H1 (cell line): ENCODE measurements at regions of chr1 and their contacts with region 1.

Region 1: GRCh38 chr1:201254625-201255506 is 28.4 kb upstream of the PKP1 start:
- DNase-seq: peak; percentile 34 to 100
- H3K4me3 ChIP-seq: no peak overlapping the region
- H3K27ac ChIP-seq: no peak overlapping the region
- H3K4me1 ChIP-seq: peaks cover 0 to 6% (median 5%) of the 10 kb centered on the region in 4 experiments; a peak in 5 of 7 replicates
- H3K27me3 ChIP-seq: no peaks in the 10 kb centered on the region; a peak in 2 of 7 replicates
- CTCF ChIP-seq: peak; percentile 97 to 98 (median 97)
- EP300 ChIP-seq: no peak
- POLR2A ChIP-seq: no peak
- RAD21 ChIP-seq: peak; percentile 98 to 99

Region 2: GRCh38 chr1:201100169-201100930 is 154.5 kb before region 1 on chr1:
- CTCF ChIA-PET with region 1: no interaction called
- POLR2A ChIA-PET with region 1: no interaction called
- DNase-seq: no peak
- H3K4me3 ChIP-seq: no peak overlapping the region
- H3K27ac ChIP-seq: no peak overlapping the region
- H3K4me1 ChIP-seq: peaks cover 0 to 3% (median 0%) of the 10 kb centered on the region in 4 experiments; a peak in 1 of 7 replicates
- H3K27me3 ChIP-seq: peaks cover 0 to 1% (median 0%) of the 10 kb centered on the region in 4 experiments; a peak in 1 of 7 replicates
- CTCF ChIP-seq: no peak
- EP300 ChIP-seq: no peak
- POLR2A ChIP-seq: no peak
- RAD21 ChIP-seq: no peak

Region 3: GRCh38 chr1:201268604-201269151 is 13.8 kb after region 1 on chr1:
- CTCF ChIA-PET with region 1: interaction called, 22 read pairs
- POLR2A ChIA-PET with region 1: no interaction called
- DNase-seq: no peak
- H3K4me3 ChIP-seq: no peak overlapping the region
- H3K27ac ChIP-seq: no peak overlapping the region
- H3K4me1 ChIP-seq: peaks cover 0 to 4% (median 0%) of the 10 kb centered on the region in 4 experiments; a peak in 2 of 7 replicates
- H3K27me3 ChIP-seq: no peaks in the 10 kb centered on the region; a peak in 1 of 7 replicates
- CTCF ChIP-seq: no peak
- EP300 ChIP-seq: no peak
- POLR2A ChIP-seq: no peak
- RAD21 ChIP-seq: no peak

Region 4: GRCh38 chr1:201282931-201283829 is 28.3 kb after region 1 on chr1 and contains the start of gene PKP1:
- CTCF ChIA-PET with region 1: interaction called, 10 read pairs
- POLR2A ChIA-PET with region 1: interaction called, 4 read pairs
- DNase-seq: peak in 1 of 2 experiments; percentile 79
- H3K4me3 ChIP-seq: peak within 1 kb of the TSS in 3 of 4 experiments; percentile 3 to 41 (median 16); a peak in 3 of 8 replicates
- H3K27ac ChIP-seq: no peak within 1 kb of the TSS
- H3K4me1 ChIP-seq: peaks cover 0 to 9% (median 9%) of the 10 kb centered on the region in 4 experiments; a peak in 5 of 7 replicates
- H3K27me3 ChIP-seq: peaks cover 15 to 31% (median 30%) of the 10 kb centered on the region in 4 experiments
- CTCF ChIP-seq: no peak
- EP300 ChIP-seq: no peak
- POLR2A ChIP-seq: no peak
- RAD21 ChIP-seq: no peak
- total RNA-seq, gene PKP1: 0.88 and 0.95 TPM in 2 replicates

Region 5: DNA sequence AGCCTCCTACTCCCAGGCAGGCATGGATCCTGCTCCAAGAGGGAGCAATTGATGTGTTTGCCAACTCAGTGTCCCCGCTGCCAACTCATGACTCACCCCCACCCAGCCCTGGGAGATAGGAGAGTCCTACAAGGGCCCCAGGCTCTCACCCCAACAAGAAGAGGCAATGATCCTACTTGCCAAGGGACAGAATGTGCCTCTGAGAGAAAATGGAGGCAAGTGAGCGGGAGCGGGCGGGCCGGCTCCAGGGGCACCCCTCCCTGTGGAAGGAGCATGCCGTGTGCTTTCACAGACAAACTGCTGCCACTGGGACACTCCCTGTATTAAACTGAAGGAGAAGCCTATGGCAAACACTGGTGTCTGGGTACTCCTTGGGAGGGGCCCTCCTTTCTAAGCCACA is 45.1 kb after region 1 on chr1:
- CTCF ChIA-PET with region 1: interaction called, 21 read pairs
- POLR2A ChIA-PET with region 1: no interaction called
- DNase-seq: no peak
- H3K4me3 ChIP-seq: no peak overlapping the region
- H3K27ac ChIP-seq: no peak overlapping the region
- H3K4me1 ChIP-seq: peaks cover 0 to 5% (median 2%) of the 10 kb centered on the region in 4 experiments; a peak in 3 of 7 replicates
- H3K27me3 ChIP-seq: no peaks in the 10 kb centered on the region; a peak in 1 of 7 replicates
- CTCF ChIP-seq: no peak
- EP300 ChIP-seq: no peak
- POLR2A ChIP-seq: no peak
- RAD21 ChIP-seq: no peak

Region 6: DNA sequence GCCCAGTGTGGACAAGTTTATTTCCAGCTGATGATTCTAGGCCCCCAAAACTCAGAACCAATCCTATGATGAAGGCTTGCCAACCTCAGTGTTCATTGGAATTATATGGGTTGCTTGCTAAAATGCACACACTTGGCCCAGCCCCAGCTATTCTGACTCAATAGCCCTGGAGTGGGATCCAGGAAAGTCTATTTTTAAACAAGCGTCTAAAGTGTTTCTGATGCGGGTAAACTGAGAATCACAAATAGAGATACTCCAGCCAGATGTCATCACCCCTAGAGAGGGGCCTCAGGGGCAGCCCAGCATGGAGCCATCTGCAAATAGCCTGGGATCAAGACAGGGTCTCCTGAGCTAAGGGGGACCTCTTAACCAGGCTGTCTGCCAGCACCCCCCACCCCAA is 74.4 kb after region 1 on chr1:
- CTCF ChIA-PET with region 1: interaction called, 11 read pairs
- POLR2A ChIA-PET with region 1: no interaction called
- DNase-seq: no peak
- H3K4me3 ChIP-seq: no peak overlapping the region
- H3K27ac ChIP-seq: no peak overlapping the region
- H3K4me1 ChIP-seq: no peaks in the 10 kb centered on the region; a peak in 1 of 7 replicates
- H3K27me3 ChIP-seq: no peaks in the 10 kb centered on the region
- CTCF ChIP-seq: no peak
- EP300 ChIP-seq: no peak
- POLR2A ChIP-seq: no peak
- RAD21 ChIP-seq: no peak

Region 7: DNA sequence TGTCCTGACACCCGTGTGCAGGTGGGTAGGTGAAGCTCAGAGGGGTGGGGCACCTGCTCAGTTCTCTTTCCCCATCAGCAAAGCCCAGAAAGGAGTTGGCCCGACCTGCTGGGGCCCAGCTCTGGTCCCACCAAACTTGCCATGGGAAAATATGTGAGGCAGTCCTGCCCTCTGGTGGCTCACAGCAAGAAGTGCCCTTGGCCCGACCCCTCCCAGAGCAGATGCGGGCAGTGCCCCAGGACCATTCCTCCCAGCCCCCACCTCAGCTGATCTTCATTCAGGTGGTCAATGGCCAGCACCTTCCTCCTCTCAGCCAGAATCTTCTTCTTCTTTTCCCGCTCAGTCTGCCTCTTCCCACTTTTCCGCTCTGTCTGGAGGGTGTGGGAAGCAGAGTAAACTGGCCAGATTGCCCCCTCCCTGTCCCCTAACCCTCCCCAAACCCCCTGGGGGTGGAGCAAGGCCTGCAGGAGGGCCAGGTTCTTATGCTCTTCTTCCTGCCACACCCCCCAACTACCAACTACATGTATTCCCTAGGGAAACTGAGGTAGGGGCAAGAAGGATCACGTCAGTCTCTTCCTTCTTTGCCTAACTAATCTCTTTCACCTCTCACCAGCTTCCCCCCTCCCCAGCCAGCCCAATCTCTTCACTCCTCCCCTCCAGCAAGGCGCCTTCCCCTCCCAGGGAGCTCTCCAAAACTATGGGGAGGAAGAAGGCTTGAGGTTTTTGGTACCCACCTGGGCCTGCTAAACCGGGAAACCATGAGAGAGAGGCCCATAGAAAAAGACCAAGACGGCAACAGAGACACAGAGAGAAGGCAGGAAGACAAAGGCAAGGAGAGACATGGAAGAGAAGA is 107.0 kb after region 1 on chr1:
- CTCF ChIA-PET with region 1: interaction called, 275 read pairs
- POLR2A ChIA-PET with region 1: interaction called, 11 read pairs
- DNase-seq: peak; percentile 56 to 88
- H3K4me3 ChIP-seq: no peak overlapping the region
- H3K27ac ChIP-seq: no peak overlapping the region
- H3K4me1 ChIP-seq: peaks cover 0 to 5% (median under 1%) of the 10 kb centered on the region in 4 experiments; a peak in 5 of 7 replicates
- H3K27me3 ChIP-seq: no peaks in the 10 kb centered on the region
- CTCF ChIP-seq: peak; percentile 94 to 96 (median 95)
- EP300 ChIP-seq: no peak
- POLR2A ChIP-seq: no peak
- RAD21 ChIP-seq: peak; percentile 98

Region 8: GRCh38 chr1:201399352-201400126 is 144.7 kb after region 1 on chr1:
- CTCF ChIA-PET with region 1: interaction called, 17 read pairs
- POLR2A ChIA-PET with region 1: no interaction called
- DNase-seq: peak; percentile 13 to 85
- H3K4me3 ChIP-seq: peak overlapping the region; percentile 51 to 74 (median 60)
- H3K27ac ChIP-seq: no peak overlapping the region
- H3K4me1 ChIP-seq: peaks cover 3 to 24% (median 16%) of the 10 kb centered on the region in 4 experiments
- H3K27me3 ChIP-seq: peaks cover 0 to 12% (median 2%) of the 10 kb centered on the region in 4 experiments; a peak in 5 of 7 replicates
- CTCF ChIP-seq: no peak
- EP300 ChIP-seq: no peak
- POLR2A ChIP-seq: peak in 1 of 2 experiments; percentile 75; a peak in 2 of 3 replicates
- RAD21 ChIP-seq: no peak